ENCODE measurements at regions of chr5 and their contacts with region 1.

Region 1: GRCh38 chr5:137320056-137321045 is 178.8 kb downstream of the SPOCK1 start:
- DNase-seq: no peak
- H3K4me3 ChIP-seq: no peak overlapping the region
- CTCF ChIP-seq: peak; percentile 57

Region 2: DNA sequence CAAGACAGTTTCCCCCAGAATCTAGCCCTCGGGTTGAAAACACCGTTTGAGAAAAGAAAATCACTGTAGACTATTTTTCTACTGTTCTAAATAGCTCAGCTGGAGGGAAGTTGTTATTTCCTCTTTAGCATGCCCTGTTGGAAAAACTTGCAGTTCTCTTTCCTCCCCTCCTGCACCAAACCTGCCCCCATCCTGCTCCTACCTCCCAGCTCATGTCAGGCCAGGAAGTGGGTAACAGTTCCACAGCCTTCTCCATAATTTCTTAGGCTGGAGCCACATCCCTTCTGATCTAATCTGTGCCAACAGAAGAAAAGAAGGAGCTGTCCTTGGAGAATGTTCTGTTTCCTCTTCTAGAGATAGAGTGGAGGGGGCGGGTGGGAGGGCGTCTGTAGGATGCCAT is 259.0 kb before region 1 on chr5:
- CTCF ChIA-PET with region 1: no interaction called
- POLR2A ChIA-PET with region 1: no interaction called
- DNase-seq: no peak
- H3K4me3 ChIP-seq: no peak overlapping the region
- CTCF ChIP-seq: no peak

Region 3: GRCh38 chr5:137310051-137310730 is 10.2 kb before region 1 on chr5:
- CTCF ChIA-PET with region 1: interaction called, 36 read pairs
- POLR2A ChIA-PET with region 1: no interaction called
- DNase-seq: peak; percentile 85
- H3K4me3 ChIP-seq: no peak overlapping the region
- CTCF ChIP-seq: no peak

Region 4: GRCh38 chr5:137344723-137345322 is 24.5 kb after region 1 on chr5:
- CTCF ChIA-PET with region 1: interaction called, 48 read pairs
- POLR2A ChIA-PET with region 1: no interaction called
- DNase-seq: no peak
- H3K4me3 ChIP-seq: no peak overlapping the region
- CTCF ChIP-seq: peak; percentile 68

Region 5: DNA sequence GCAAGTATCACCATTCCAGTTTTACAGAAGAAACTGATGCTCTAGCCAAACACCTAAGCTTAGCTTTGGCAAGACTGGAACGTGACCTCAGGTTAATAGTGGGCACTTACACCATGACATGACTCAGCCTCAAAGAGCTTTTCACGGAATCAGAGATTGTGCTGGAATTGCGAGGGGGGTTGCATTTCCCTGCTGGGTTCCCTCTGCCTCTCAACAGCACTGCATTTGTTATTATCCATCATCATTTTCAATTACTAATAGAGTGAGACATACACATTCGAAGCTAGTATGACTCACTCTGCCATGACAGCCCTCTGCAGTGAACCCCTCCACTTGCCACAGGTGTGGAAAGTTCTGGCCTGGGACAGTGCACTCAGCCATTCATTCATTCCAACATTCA is 170.8 kb after region 1 on chr5:
- CTCF ChIA-PET with region 1: interaction called, 170 read pairs
- POLR2A ChIA-PET with region 1: no interaction called
- DNase-seq: no peak
- H3K4me3 ChIP-seq: no peak overlapping the region
- CTCF ChIP-seq: no peak

Region 6: DNA sequence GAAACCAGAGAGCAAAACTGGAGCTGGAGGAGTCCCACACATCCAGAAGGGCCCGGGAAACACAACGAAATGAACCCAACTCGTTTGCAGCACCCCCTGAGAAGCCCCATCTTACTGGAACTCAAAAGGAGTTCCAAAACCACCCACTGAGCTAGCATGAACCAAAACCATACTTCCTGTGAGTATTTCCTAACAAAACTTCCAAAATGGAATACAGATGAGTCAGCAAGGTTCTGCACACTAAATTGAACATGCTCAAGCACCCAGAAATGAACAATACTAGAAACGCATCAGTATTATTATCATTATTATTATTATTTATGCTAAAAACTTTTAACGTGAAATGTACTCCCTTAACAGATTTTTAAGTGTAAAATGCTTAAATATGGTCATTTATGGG is 186.8 kb after region 1 on chr5:
- CTCF ChIA-PET with region 1: interaction called, 22 read pairs
- POLR2A ChIA-PET with region 1: no interaction called
- DNase-seq: no peak
- H3K4me3 ChIP-seq: no peak overlapping the region
- CTCF ChIP-seq: no peak

Region 7: DNA sequence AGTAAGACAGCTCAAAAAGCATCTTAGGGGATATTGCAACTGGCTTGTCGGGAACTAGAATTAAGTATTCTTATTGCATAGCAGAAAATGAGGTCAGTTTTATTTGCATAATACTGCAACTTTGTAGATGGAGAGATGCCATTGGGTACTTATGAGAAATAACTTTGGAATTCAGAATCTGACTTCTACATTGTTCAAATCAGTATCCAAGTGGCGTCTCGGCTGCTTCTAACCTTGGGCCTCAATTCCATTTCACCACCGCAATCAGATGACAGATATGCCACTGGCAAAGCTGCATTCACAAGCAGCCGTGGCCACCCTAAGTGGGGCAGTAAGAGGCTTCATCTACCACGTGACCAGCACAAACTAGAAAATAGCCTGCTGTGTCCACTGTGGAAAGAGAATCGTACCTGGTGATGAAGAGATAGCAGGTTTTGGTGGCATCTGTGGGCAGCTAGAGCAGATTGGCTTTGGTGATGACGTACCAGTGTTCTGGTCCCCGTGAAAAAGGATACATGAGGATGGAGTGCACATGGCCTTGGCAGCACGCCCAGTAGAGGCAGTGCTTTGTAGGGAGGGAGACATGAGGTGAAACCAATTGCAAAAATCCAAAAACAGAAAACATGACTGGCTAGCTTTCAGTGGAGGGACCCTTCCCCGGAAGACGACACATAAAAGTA is 299.0 kb after region 1 on chr5:
- CTCF ChIA-PET with region 1: interaction called, 21 read pairs
- POLR2A ChIA-PET with region 1: no interaction called
- DNase-seq: peak; percentile 88
- H3K4me3 ChIP-seq: no peak overlapping the region
- CTCF ChIP-seq: no peak